GM12878 (cell line): ENCODE measurements at regions of chr6 and their contacts with region 1.

Region 1: GRCh38 chr6:41723530-41724227 is 11.7 kb downstream of the TFEB start:
- DNase-seq: no peak
- ATAC-seq: peak; percentile 82
- H3K4me3 ChIP-seq: peak overlapping the region; percentile 81
- H3K27ac ChIP-seq: peak overlapping the region; percentile 97
- H3K4me1 ChIP-seq: peaks cover 75% of the 10 kb centered on the region
- H3K27me3 ChIP-seq: no peaks in the 10 kb centered on the region
- CTCF ChIP-seq: no peak
- EP300 ChIP-seq: peak; percentile 41 to 60; a peak in 2 of 4 replicates
- POLR2A ChIP-seq: peak; percentile 90
- RAD21 ChIP-seq: no peak; the same call in 1 of the 2 replicates

Region 2: GRCh38 chr6:41705996-41706835 is 17.5 kb before region 1 on chr6:
- CTCF ChIA-PET with region 1: interaction called, 57 read pairs
- POLR2A ChIA-PET with region 1: interaction called, 210 read pairs
- RAD21 ChIA-PET with region 1: interaction called, 300 read pairs
- SMC1A ChIA-PET with region 1: interaction called, 168 read pairs
- in situ Hi-C with region 1: no loop called
- intact Hi-C with region 1: loop called (anchors 2 kb)
- DNase-seq: peak; percentile 87
- ATAC-seq: peak; percentile 90
- H3K4me3 ChIP-seq: peak overlapping the region; percentile 85
- H3K27ac ChIP-seq: peak overlapping the region; percentile 99
- H3K4me1 ChIP-seq: peaks cover 55% of the 10 kb centered on the region
- H3K27me3 ChIP-seq: no peaks in the 10 kb centered on the region
- CTCF ChIP-seq: peak; percentile 82 to 96 (median 91)
- EP300 ChIP-seq: peak; percentile 93 to 97
- POLR2A ChIP-seq: peak; percentile 51; the same call in 1 of the 2 replicates
- RAD21 ChIP-seq: peak; percentile 48

Region 3: DNA sequence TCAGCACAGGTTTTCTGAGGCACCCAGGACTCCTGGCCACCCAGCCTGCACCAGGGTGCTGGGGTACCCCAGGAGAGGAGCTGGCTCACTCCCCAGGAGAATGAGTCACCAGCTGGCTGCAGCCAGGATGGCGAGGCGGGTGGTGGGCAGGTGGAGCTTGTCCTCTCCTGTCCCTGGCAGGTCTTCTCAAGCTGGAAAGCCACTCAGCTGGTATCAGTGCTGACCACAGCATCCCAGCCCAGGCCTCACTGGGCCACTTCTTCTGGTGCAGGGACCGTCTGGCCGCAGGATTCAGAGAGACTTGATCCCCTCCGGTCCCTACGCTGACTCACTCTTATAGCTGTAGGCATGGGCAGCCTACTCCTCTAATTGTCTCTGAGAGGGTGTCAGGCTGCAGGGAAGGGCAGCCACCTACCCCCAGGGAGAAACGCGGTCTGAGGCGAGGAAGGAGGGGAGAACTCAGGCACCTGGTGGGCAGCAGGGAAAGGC is 10.5 kb before region 1 on chr6:
- CTCF ChIA-PET with region 1: interaction called, 21 read pairs
- POLR2A ChIA-PET with region 1: interaction called, 293 read pairs
- RAD21 ChIA-PET with region 1: interaction called, 300 read pairs
- SMC1A ChIA-PET with region 1: interaction called, 168 read pairs
- in situ Hi-C with region 1: no loop called
- intact Hi-C with region 1: loop called (anchors 1 kb)
- DNase-seq: no peak
- ATAC-seq: no peak
- H3K4me3 ChIP-seq: no peak overlapping the region
- H3K27ac ChIP-seq: peak overlapping the region; percentile 84
- H3K4me1 ChIP-seq: peaks cover 63% of the 10 kb centered on the region
- H3K27me3 ChIP-seq: no peaks in the 10 kb centered on the region
- CTCF ChIP-seq: no peak
- EP300 ChIP-seq: no peak
- POLR2A ChIP-seq: no peak; the same call in 1 of the 2 replicates
- RAD21 ChIP-seq: no peak